ENCODE measurements at regions of chr11 and their contacts with region 1.

Region 1: DNA sequence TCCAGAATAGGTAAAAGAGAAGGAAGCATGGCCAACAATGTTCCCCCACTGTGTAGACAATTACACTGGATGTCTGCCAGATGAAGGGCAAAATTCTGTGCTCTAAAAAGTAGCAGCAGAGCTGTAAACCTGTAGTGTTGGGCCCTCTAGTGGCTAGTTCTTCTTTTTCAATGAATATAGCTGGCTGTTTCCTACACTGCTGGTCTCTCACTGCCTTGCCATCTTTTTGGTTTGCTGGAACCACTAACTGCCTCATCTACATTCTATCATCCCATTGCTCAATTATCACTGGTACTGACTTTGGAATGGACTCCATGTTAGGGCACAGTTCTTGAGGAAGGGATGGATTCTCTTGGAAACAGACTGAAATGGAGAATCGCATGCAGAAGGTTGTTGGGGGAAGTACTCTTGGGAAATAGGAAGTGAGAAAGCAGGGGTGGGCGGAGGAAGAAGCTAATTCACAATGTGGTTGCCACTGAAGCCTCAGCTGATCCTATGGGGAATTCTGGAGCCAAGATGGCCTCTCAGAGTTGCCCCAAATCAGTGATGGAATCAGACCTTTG is 17.9 kb downstream of the KCNE3 start:
- DNase-seq: peak; percentile 12
- H3K4me3 Mint-ChIP-seq: no peak overlapping the region
- H3K27ac Mint-ChIP-seq: no peak overlapping the region
- H3K4me1 Mint-ChIP-seq: peaks cover 7% of the 10 kb centered on the region
- H3K27me3 Mint-ChIP-seq: peaks cover 12% of the 10 kb centered on the region

Region 2: GRCh38 chr11:74255741-74256369 is 193.6 kb before region 1 on chr11:
- intact Hi-C with region 1: loop called (anchors 1 kb)
- DNase-seq: peak; percentile 35
- H3K4me3 Mint-ChIP-seq: no peak overlapping the region
- H3K27ac Mint-ChIP-seq: no peak overlapping the region
- H3K4me1 Mint-ChIP-seq: peaks cover 5% of the 10 kb centered on the region
- H3K27me3 Mint-ChIP-seq: peaks cover 2% of the 10 kb centered on the region

Region 3: DNA sequence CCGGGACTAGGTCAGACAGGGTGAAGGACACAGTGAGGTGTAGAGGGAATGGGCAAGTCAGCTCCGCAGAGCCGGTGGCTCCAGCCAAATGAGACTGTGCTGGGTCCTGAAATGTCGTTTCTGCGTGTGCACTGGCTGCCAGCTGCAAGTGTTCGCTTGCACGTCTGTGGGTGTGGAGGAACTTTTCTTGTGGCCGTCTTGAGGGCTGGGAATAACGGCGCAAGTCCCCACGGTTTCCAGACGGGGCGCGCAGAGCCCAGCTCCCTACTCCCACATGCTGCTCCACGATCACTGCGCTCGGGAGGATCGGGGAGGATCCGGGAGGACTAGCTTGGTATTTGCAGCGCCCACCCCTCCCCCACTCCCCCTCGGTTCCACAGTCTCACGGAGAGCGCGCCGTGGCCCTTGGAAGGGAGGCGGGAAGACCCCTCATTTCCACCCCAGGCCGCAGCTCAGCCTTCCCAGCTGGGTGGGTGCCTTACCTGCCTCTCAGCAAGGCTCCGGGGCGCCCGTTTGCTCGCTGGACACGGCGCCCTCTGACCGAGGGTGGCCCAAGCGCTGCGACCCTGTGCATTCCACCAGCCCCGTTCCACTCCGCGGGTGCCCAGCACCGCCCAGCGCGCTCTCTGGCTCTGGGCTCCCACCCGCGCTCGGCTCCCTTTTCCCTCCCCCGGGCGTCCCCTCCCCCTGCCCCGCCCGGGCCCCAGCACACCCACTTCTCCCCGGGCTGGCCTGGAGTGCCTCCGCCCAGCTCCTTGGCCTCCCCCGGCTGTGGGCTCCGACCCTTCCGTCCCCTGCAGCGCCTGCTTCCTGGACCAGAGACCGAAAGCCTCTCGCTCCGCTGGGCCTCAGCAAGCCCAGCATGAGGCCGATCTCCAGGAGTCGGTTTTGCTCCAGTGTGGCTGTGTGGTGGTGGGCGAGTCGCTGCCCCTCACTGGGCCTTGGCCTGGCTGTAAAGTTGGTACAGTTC is 17.8 kb after region 1 on chr11 and contains the start of gene KCNE3:
- intact Hi-C with region 1: no loop called
- DNase-seq: no peak
- H3K4me3 Mint-ChIP-seq: no peak within 1 kb of the TSS
- H3K27ac Mint-ChIP-seq: no peak within 1 kb of the TSS
- H3K4me1 Mint-ChIP-seq: no peaks in the 10 kb centered on the region
- H3K27me3 Mint-ChIP-seq: peaks cover 29% of the 10 kb centered on the region
- total RNA-seq, gene KCNE3: not detected in 2 replicates

Region 4: GRCh38 chr11:74492974-74493790 is 43.7 kb after region 1 on chr11 and contains the start of gene LIPT2:
- intact Hi-C with region 1: loop called (anchors 2 kb)
- DNase-seq: peak; percentile 96
- H3K4me3 Mint-ChIP-seq: peak within 1 kb of the TSS; percentile 86
- H3K27ac Mint-ChIP-seq: peak within 1 kb of the TSS; percentile 83
- H3K4me1 Mint-ChIP-seq: peaks cover 21% of the 10 kb centered on the region
- H3K27me3 Mint-ChIP-seq: peaks cover 8% of the 10 kb centered on the region
- total RNA-seq, gene LIPT2: 2.7 and 3.4 TPM in 2 replicates

Region 5: DNA sequence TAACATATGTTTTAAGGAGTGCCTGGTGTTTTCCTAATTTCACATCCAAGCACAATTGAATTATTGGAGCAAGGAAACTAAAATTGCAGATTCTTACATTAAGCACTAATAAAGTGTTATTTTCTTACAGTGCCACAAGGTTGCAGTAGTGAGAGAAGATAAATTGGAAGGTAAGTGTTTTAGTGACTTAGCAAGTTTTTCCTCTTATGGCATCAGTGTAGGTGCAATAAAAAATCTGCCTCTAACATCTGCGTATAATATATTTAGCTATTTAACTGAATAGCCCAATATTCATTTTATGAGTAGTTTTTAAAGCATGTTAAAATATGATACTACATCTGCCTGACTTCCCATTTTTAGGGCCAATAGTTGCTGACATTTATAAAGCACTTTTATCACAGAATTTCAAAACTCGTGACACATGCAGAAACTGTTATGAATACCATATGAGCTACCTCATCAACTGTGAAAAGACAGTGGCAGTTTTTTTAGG is 162.0 kb after region 1 on chr11:
- intact Hi-C with region 1: no loop called
- DNase-seq: no peak
- H3K4me3 Mint-ChIP-seq: no peak overlapping the region
- H3K27ac Mint-ChIP-seq: no peak overlapping the region
- H3K4me1 Mint-ChIP-seq: no peaks in the 10 kb centered on the region
- H3K27me3 Mint-ChIP-seq: no peaks in the 10 kb centered on the region

Region 6: GRCh38 chr11:74726547-74727182 is 277.2 kb after region 1 on chr11:
- intact Hi-C with region 1: loop called (anchors 2 kb)
- DNase-seq: peak; percentile 35
- H3K4me3 Mint-ChIP-seq: no peak overlapping the region
- H3K27ac Mint-ChIP-seq: no peak overlapping the region
- H3K4me1 Mint-ChIP-seq: no peaks in the 10 kb centered on the region
- H3K27me3 Mint-ChIP-seq: peaks cover 55% of the 10 kb centered on the region

Measured in activated T-helper 1 cell treated with anti-CD3 and anti-CD28 coated beads, Interleukin-12 subunit alpha, Interleukin-12 subunit beta, Interleukin-2, Interleukin-4 antibody, amounts not matched to agents 30 ng/mL and 10 ng/mL and 1 ng/mL, durations not matched to agents 14 hours and 24 hours and 36 hours (primary cell).